ENCODE measurements at regions of chr15 and their contacts with region 1.

Region 1: GRCh38 chr15:68875377-68876116 is 54.8 kb upstream of the SPESP1 start:
- DNase-seq: peak; percentile 86 to 97 (median 92)
- ATAC-seq: peak; percentile 84
- H3K4me3 ChIP-seq: no peak overlapping the region
- H3K4me3 Mint-ChIP-seq: no peak overlapping the region
- H3K27ac ChIP-seq: no peak overlapping the region
- H3K27ac Mint-ChIP-seq: no peak overlapping the region
- H3K4me1 ChIP-seq: peaks cover 6% of the 10 kb centered on the region
- H3K4me1 Mint-ChIP-seq: no peaks in the 10 kb centered on the region
- H3K27me3 ChIP-seq: peaks cover 12 to 17% of the 10 kb centered on the region in 2 experiments
- H3K27me3 Mint-ChIP-seq: peaks cover 37% of the 10 kb centered on the region
- CTCF ChIP-seq: peak; percentile 87

Region 2: DNA sequence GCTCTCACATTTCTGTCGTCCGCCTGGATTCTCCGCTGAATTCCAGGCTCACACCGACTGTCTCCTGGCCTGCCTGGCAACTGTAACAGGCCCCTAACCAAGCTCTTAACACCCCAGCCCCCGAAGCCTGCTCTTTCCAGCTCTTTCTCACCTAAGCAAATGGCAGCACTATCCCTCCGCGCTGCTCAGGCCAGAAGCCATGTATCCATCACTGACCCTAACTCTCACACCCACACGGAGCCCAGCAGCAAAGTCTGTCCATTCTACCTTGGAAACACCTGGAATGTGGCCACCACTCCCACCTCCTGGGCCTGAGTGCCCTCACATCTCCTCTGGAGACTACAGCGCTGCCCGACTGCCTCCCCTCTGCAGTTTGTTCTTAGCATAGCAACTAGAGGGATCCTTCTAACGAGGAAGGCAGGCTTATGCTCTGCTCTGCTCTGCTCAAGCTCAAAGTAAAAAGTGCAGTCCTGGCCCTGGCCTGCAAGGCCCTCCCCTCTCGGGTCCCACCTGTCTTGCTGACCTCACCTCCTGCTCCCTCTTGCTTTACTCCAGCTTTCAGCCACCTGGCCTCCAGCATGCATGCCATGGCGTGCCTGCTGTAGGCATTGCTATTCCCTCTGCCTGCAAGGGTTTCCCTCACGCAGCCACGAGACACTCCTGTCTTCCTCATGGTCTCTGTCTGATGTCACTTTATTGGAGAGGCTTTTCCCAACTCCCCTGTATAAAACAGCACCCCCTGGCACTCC is 570.8 kb before region 1 on chr15:
- CTCF ChIA-PET with region 1: interaction called, 3 read pairs
- POLR2A ChIA-PET with region 1: no interaction called
- intact Hi-C with region 1: loop called in 1 of 2 experiments (anchors 5 kb)
- DNase-seq: no peak
- ATAC-seq: no peak
- H3K4me3 ChIP-seq: no peak overlapping the region
- H3K4me3 Mint-ChIP-seq: no peak overlapping the region
- H3K27ac ChIP-seq: no peak overlapping the region
- H3K27ac Mint-ChIP-seq: no peak overlapping the region
- H3K4me1 ChIP-seq: peaks cover 8% of the 10 kb centered on the region
- H3K4me1 Mint-ChIP-seq: peaks cover 35% of the 10 kb centered on the region
- H3K27me3 ChIP-seq: peaks cover 0 to 4% of the 10 kb centered on the region in 2 experiments
- H3K27me3 Mint-ChIP-seq: no peaks in the 10 kb centered on the region
- CTCF ChIP-seq: no peak

Region 3: DNA sequence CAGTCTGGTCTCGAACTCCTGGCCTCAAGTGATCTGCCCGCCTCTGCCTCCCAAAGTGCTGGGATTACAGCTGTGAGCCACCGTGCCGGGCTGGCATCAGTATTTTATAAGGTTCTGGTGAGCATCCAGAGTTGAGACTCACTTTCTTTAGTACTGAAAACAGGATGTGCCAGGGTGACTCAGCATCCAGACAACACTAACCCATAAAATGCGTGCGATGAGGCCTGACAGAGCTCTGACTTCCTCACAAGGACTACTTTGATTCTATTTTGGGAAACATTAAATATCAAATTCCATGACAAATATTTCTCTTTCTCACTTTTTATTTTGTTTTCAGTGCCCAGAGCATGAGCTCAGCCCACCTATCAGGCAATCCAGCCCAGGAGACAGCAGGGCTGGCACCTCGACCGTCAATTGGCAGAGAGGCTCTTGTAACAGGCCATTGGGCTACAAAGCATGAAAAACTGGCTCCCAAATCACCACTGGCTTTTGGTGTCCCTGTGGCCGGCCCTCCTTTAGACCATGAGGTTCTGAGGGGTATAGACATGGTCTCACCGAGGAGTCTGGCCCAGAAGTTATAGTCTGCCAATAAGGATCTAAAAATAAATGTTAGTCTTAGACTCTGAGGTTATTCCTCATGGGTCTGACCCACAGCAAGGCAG is 523.0 kb before region 1 on chr15:
- CTCF ChIA-PET with region 1: no interaction called
- POLR2A ChIA-PET with region 1: no interaction called
- intact Hi-C with region 1: no loop called
- DNase-seq: peak in 8 of 14 experiments; percentile 12 to 67 (median 25)
- ATAC-seq: peak; percentile 68
- H3K4me3 ChIP-seq: no peak overlapping the region
- H3K4me3 Mint-ChIP-seq: no peak overlapping the region
- H3K27ac ChIP-seq: no peak overlapping the region
- H3K27ac Mint-ChIP-seq: peak overlapping the region; percentile 52
- H3K4me1 ChIP-seq: peaks cover 6% of the 10 kb centered on the region
- H3K4me1 Mint-ChIP-seq: peaks cover 7% of the 10 kb centered on the region
- H3K27me3 ChIP-seq: no peaks in the 10 kb centered on the region
- H3K27me3 Mint-ChIP-seq: no peaks in the 10 kb centered on the region
- CTCF ChIP-seq: no peak

Region 4: GRCh38 chr15:68559345-68560310 is 315.9 kb before region 1 on chr15:
- CTCF ChIA-PET with region 1: interaction called, 10 read pairs
- POLR2A ChIA-PET with region 1: interaction called, 3 read pairs
- intact Hi-C with region 1: loop called (anchors 1 to 2 kb)
- DNase-seq: peak; percentile 48 to 85 (median 64)
- ATAC-seq: peak; percentile 93
- H3K4me3 ChIP-seq: peak overlapping the region; percentile 39
- H3K4me3 Mint-ChIP-seq: peak overlapping the region; percentile 75
- H3K27ac ChIP-seq: no peak overlapping the region
- H3K27ac Mint-ChIP-seq: no peak overlapping the region
- H3K4me1 ChIP-seq: peaks cover 17% of the 10 kb centered on the region
- H3K4me1 Mint-ChIP-seq: peaks cover 16% of the 10 kb centered on the region
- H3K27me3 ChIP-seq: peaks cover 24 to 28% of the 10 kb centered on the region in 2 experiments
- H3K27me3 Mint-ChIP-seq: peaks cover 63% of the 10 kb centered on the region
- CTCF ChIP-seq: peak; percentile 99

Region 5: GRCh38 chr15:68730471-68730919 is 145.1 kb before region 1 on chr15:
- CTCF ChIA-PET with region 1: interaction called, 5 read pairs
- POLR2A ChIA-PET with region 1: no interaction called
- intact Hi-C with region 1: loop called in 1 of 2 experiments (anchors 1 kb)
- DNase-seq: peak in 9 of 14 experiments; percentile 2 to 58 (median 11)
- ATAC-seq: no peak
- H3K4me3 ChIP-seq: no peak overlapping the region
- H3K4me3 Mint-ChIP-seq: no peak overlapping the region
- H3K27ac ChIP-seq: no peak overlapping the region
- H3K27ac Mint-ChIP-seq: no peak overlapping the region
- H3K4me1 ChIP-seq: no peaks in the 10 kb centered on the region
- H3K4me1 Mint-ChIP-seq: no peaks in the 10 kb centered on the region
- H3K27me3 ChIP-seq: peaks cover 0 to 2% of the 10 kb centered on the region in 2 experiments
- H3K27me3 Mint-ChIP-seq: peaks cover 4% of the 10 kb centered on the region
- CTCF ChIP-seq: peak; percentile 50

Region 6: GRCh38 chr15:68820295-68821189 is 55.0 kb before region 1 on chr15 and contains the start of gene ANP32A:
- CTCF ChIA-PET with region 1: no interaction called
- POLR2A ChIA-PET with region 1: interaction called, 7 read pairs
- intact Hi-C with region 1: loop called in 1 of 2 experiments (anchors 5 kb)
- DNase-seq: peak; percentile 94 to 99 (median 96)
- ATAC-seq: peak; percentile 62
- H3K4me3 ChIP-seq: peak within 1 kb of the TSS; percentile 98
- H3K4me3 Mint-ChIP-seq: peak within 1 kb of the TSS; percentile 95
- H3K27ac ChIP-seq: peak within 1 kb of the TSS; percentile 74 to 89
- H3K27ac Mint-ChIP-seq: peak within 1 kb of the TSS; percentile 92
- H3K4me1 ChIP-seq: peaks cover 22% of the 10 kb centered on the region
- H3K4me1 Mint-ChIP-seq: peaks cover 36% of the 10 kb centered on the region
- H3K27me3 ChIP-seq: no peaks in the 10 kb centered on the region
- H3K27me3 Mint-ChIP-seq: no peaks in the 10 kb centered on the region
- CTCF ChIP-seq: no peak
- total RNA-seq, gene ANP32A: 55.1 to 57.3 TPM

Measured in CD4-positive, alpha-beta T cell (primary cell).